GM12878 (cell line): ENCODE measurements at regions of chr20 and their contacts with region 1.

Region 1: GRCh38 chr20:37178839-37179670 is at the starts of genes MROH8 and RPN2:
- DNase-seq: peak; percentile 83
- ATAC-seq: peak; percentile 98
- H3K4me3 ChIP-seq: peak within 1 kb of the TSS; percentile 92
- H3K27ac ChIP-seq: peak within 1 kb of the TSS; percentile 98
- H3K4me1 ChIP-seq: peaks cover 7% of the 10 kb centered on the region
- H3K27me3 ChIP-seq: no peaks in the 10 kb centered on the region
- CTCF ChIP-seq: no peak
- EP300 ChIP-seq: 0 out of 4 replicates have a peak, but pooled peaks of 1 of the 2 experiments have one; percentile 10
- POLR2A ChIP-seq: peak; percentile 92
- RAD21 ChIP-seq: no peak
- polyA plus RNA-seq, gene MROH8: 0.16 to 0.93 TPM
- polyA plus RNA-seq, gene RPN2: 274 to 365 TPM

Region 2: GRCh38 chr20:36932476-36933426 is 246.3 kb before region 1 on chr20:
- CTCF ChIA-PET with region 1: no interaction called
- POLR2A ChIA-PET with region 1: interaction called, 16 read pairs
- RAD21 ChIA-PET with region 1: no interaction called
- SMC1A ChIA-PET with region 1: no interaction called
- in situ Hi-C with region 1: no loop called
- intact Hi-C with region 1: no loop called
- DNase-seq: no peak
- ATAC-seq: no peak
- H3K4me3 ChIP-seq: no peak overlapping the region
- H3K27ac ChIP-seq: no peak overlapping the region
- H3K4me1 ChIP-seq: no peaks in the 10 kb centered on the region
- H3K27me3 ChIP-seq: no peaks in the 10 kb centered on the region
- CTCF ChIP-seq: no peak
- EP300 ChIP-seq: no peak
- POLR2A ChIP-seq: no peak
- RAD21 ChIP-seq: no peak

Region 3: DNA sequence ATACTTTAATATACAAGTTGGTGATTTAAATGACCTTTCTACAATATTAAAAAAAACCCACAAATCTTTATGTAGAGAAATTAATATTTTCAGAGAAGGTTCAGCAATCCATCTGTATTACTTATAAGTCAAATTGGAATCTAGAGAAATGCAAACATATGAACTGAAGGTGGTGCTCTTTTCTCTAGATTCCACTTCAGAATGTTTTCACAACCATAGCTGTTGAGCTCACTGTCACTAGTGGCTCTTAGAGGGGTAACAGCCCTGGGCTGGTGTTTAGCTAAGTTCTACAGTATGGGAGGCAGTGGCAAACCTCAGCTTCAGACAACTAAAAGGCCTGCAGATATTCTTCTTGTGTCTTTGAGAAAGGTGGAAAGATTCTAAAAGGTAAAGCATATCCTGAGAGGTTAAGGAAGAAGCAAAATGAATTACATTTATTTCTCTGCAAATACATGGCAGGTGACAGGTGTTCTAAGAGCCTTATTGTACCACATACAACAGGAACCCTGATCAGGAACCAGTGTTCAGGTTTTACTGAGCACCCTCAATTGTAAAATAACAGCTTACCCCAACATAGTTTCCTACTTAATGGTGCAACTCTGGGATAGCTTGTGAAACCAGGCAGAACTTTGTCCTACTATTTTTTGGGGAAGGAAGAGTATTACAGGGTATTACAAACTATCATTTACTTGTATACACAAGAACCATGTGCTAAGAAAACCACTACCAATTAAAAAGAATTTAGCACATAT is 171.0 kb before region 1 on chr20:
- CTCF ChIA-PET with region 1: interaction called, 13 read pairs
- POLR2A ChIA-PET with region 1: interaction called, 5 read pairs
- RAD21 ChIA-PET with region 1: interaction called, 7 read pairs
- SMC1A ChIA-PET with region 1: interaction called, 5 read pairs
- in situ Hi-C with region 1: no loop called
- intact Hi-C with region 1: loop called (anchors 10 kb)
- DNase-seq: no peak
- ATAC-seq: peak; percentile 85
- H3K4me3 ChIP-seq: no peak overlapping the region
- H3K27ac ChIP-seq: peak overlapping the region; percentile 37; the same call in 1 of the 2 replicates
- H3K4me1 ChIP-seq: peaks cover 23% of the 10 kb centered on the region
- H3K27me3 ChIP-seq: no peaks in the 10 kb centered on the region
- CTCF ChIP-seq: peak; percentile 33 to 36 (median 36); a peak in 4 of 6 replicates
- EP300 ChIP-seq: no peak
- POLR2A ChIP-seq: no peak
- RAD21 ChIP-seq: peak; percentile 60

Region 4: GRCh38 chr20:37095599-37096414 is 83.2 kb before region 1 on chr20 and contains the start of gene RBL1:
- CTCF ChIA-PET with region 1: interaction called, 4 read pairs
- POLR2A ChIA-PET with region 1: interaction called, 17 read pairs
- RAD21 ChIA-PET with region 1: no interaction called
- SMC1A ChIA-PET with region 1: interaction called, 3 read pairs
- in situ Hi-C with region 1: no loop called
- intact Hi-C with region 1: loop called (anchors 5 kb)
- DNase-seq: peak; percentile 60
- ATAC-seq: peak; percentile 86
- H3K4me3 ChIP-seq: peak within 1 kb of the TSS; percentile 69
- H3K27ac ChIP-seq: peak within 1 kb of the TSS; percentile 96
- H3K4me1 ChIP-seq: peaks cover 16% of the 10 kb centered on the region
- H3K27me3 ChIP-seq: no peaks in the 10 kb centered on the region
- CTCF ChIP-seq: peak; percentile 4 to 13 (median 7); a peak in 1 of 6 replicates
- EP300 ChIP-seq: no peak
- POLR2A ChIP-seq: peak; percentile 96
- RAD21 ChIP-seq: no peak
- polyA plus RNA-seq, gene RBL1: 4.5 to 4.9 TPM

Region 5: DNA sequence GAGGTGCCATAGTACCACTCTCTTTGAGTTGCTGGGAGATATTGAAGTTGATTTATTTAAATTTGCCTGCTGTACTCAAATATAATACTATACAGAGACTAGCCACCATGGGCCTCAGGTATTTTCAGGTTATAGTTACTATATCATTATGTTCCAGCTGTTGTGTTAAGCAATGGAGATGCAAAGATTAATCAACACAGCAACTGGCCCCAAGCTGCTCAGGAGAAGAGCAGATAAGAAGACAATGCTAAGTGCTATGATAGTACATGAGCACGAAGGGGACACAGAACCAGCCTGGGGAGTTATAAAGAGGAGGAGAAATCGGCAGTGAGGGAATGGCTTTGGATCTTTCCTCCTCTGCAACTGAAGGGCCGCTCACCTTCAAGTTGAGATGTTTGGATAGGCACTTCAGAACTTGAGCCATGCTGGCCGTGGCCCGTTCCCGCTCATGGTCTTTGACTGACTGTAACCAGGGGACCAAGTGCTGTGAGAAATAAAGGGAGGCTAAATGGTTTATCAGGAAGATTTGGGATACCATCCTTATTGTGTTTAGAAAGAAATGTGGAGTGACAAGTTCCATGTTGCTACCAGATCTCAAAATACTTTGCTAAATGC is 24.3 kb before region 1 on chr20:
- CTCF ChIA-PET with region 1: interaction called, 10 read pairs
- POLR2A ChIA-PET with region 1: no interaction called
- RAD21 ChIA-PET with region 1: no interaction called
- SMC1A ChIA-PET with region 1: interaction called, 3 read pairs
- in situ Hi-C with region 1: no loop called
- intact Hi-C with region 1: no loop called
- DNase-seq: no peak
- ATAC-seq: no peak
- H3K4me3 ChIP-seq: no peak overlapping the region
- H3K27ac ChIP-seq: no peak overlapping the region
- H3K4me1 ChIP-seq: no peaks in the 10 kb centered on the region
- H3K27me3 ChIP-seq: no peaks in the 10 kb centered on the region
- CTCF ChIP-seq: no peak
- EP300 ChIP-seq: no peak
- POLR2A ChIP-seq: no peak
- RAD21 ChIP-seq: no peak

Region 6: DNA sequence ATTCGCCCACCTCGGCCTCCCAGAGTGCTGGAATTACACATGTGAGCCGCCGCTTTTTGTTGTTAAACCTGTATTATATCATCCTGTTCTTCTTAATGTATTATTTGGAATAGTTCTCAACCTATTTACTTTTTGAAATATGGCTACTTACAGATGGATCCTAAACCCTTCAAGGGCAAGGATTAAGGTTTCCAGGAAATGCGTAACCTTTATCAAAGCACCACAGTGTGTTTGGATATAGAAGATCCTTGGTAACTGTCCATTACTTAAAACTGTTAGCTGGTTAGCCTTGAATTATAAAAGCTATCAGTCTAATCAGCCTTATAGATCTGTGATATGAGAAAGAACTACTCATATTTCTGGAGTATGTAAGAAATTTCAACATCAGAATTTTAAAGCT is 12.2 kb before region 1 on chr20:
- CTCF ChIA-PET with region 1: interaction called, 10 read pairs
- POLR2A ChIA-PET with region 1: interaction called, 6 read pairs
- RAD21 ChIA-PET with region 1: no interaction called
- SMC1A ChIA-PET with region 1: interaction called, 3 read pairs
- in situ Hi-C with region 1: no loop called
- intact Hi-C with region 1: no loop called
- DNase-seq: no peak
- ATAC-seq: no peak
- H3K4me3 ChIP-seq: no peak overlapping the region
- H3K27ac ChIP-seq: no peak overlapping the region
- H3K4me1 ChIP-seq: no peaks in the 10 kb centered on the region
- H3K27me3 ChIP-seq: no peaks in the 10 kb centered on the region
- CTCF ChIP-seq: no peak
- EP300 ChIP-seq: no peak
- POLR2A ChIP-seq: no peak
- RAD21 ChIP-seq: no peak

Region 7: DNA sequence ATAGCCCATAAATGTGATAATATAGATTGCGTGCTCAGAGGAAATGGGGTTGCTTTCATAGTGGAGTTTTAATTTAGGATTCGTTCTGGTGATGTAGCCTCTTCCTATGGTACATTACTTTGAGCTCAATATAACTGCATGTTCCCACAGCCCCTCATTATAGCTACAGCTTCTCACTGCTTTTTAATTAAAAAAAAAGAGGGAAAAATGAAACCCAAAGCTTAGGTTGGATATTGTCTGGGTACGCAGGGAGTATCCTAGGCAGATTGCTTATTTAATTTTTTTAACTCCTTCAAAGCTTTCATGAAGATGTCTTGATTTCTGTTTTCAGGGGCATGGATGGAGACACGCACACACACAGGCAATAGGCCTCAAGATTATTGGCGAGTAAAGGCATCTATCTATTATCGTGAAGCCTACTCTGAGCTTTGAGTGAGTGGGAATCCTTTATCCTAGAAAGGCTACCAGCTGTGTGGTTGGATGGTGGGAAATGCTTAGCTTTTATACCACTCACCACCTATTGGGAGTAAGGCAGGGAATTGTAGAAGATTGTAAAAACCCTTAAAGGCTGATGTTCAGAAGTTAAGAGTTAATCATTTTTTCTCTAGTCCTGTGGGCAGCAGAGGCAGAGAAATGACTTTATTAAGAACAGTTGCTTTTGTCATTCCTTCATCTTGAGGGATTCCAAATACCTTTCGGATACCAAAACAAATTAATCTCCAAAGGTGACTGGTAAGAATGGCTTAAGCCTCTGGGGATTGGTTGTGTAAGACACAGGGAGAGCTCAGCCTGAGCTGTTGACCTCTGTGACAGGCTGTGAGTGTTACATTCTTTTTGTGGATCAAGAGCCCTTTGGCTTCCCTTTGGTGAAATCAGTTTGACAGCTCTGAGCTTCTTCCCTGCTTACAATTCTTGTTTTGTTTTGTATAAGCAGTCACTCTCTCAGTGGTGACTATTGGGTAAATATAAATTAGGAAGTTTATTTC is 548.2 kb after region 1 on chr20:
- CTCF ChIA-PET with region 1: no interaction called
- POLR2A ChIA-PET with region 1: no interaction called
- RAD21 ChIA-PET with region 1: no interaction called
- SMC1A ChIA-PET with region 1: no interaction called
- in situ Hi-C with region 1: no loop called
- intact Hi-C with region 1: no loop called
- DNase-seq: no peak
- ATAC-seq: peak; percentile 34
- H3K4me3 ChIP-seq: no peak overlapping the region
- H3K27ac ChIP-seq: no peak overlapping the region
- H3K4me1 ChIP-seq: no peaks in the 10 kb centered on the region; the same call in 1 of the 2 replicates
- H3K27me3 ChIP-seq: no peaks in the 10 kb centered on the region
- CTCF ChIP-seq: no peak
- EP300 ChIP-seq: no peak
- POLR2A ChIP-seq: no peak
- RAD21 ChIP-seq: no peak